Transverse colon (tissue), 4 donors: ENCODE measurements at regions of chr1 and their contacts with region 1.

Region 1: GRCh38 chr1:109282952-109283747 is at the start of gene PSRC1:
- DNase-seq: peak; percentile 97
- H3K4me3 ChIP-seq: peak within 1 kb of the TSS; percentile 39 to 52 (median 52)
- H3K27ac ChIP-seq: peak within 1 kb of the TSS; percentile 87 to 96 (median 90)
- H3K4me1 ChIP-seq: peaks cover 8 to 23% (median 19%) of the 10 kb centered on the region in 4 donors
- H3K27me3 ChIP-seq: no peaks in the 10 kb centered on the region
- CTCF ChIP-seq: peak; percentile 35 to 90 (median 65)
- EP300 ChIP-seq: no peak
- POLR2A ChIP-seq: peak; percentile 72
- total RNA-seq, gene PSRC1: 1.9 to 18.0 (median 4.4) TPM

Region 2: GRCh38 chr1:109229531-109230127 is 53.5 kb before region 1 on chr1:
- in situ Hi-C with region 1: no loop called
- intact Hi-C with region 1: no loop called
- DNase-seq: no peak
- H3K4me3 ChIP-seq: no peak overlapping the region
- H3K27ac ChIP-seq: no peak overlapping the region
- H3K4me1 ChIP-seq: no peaks in the 10 kb centered on the region
- H3K27me3 ChIP-seq: no peaks in the 10 kb centered on the region
- CTCF ChIP-seq: no peak
- EP300 ChIP-seq: no peak
- POLR2A ChIP-seq: no peak

Region 3: GRCh38 chr1:109397538-109398342 is 114.6 kb after region 1 on chr1 and contains the start of gene SORT1:
- in situ Hi-C with region 1: loop called in 3 of 4 experiments (anchors 5 to 25 kb)
- intact Hi-C with region 1: loop called (anchors 5 kb)
- DNase-seq: peak; percentile 85
- H3K4me3 ChIP-seq: peak within 1 kb of the TSS; percentile 29 to 82 (median 74)
- H3K27ac ChIP-seq: peak within 1 kb of the TSS; percentile 85 to 89 (median 86)
- H3K4me1 ChIP-seq: peaks cover 17 to 54% (median 44%) of the 10 kb centered on the region in 4 donors
- H3K27me3 ChIP-seq: no peaks in the 10 kb centered on the region
- CTCF ChIP-seq: no peak
- EP300 ChIP-seq: no peak
- POLR2A ChIP-seq: peak; percentile 14
- total RNA-seq, gene SORT1: 53.5 to 79.3 (median 66.2) TPM